HCT116 (cell line): ENCODE measurements at regions of chr18 and their contacts with region 1.

Region 1: DNA sequence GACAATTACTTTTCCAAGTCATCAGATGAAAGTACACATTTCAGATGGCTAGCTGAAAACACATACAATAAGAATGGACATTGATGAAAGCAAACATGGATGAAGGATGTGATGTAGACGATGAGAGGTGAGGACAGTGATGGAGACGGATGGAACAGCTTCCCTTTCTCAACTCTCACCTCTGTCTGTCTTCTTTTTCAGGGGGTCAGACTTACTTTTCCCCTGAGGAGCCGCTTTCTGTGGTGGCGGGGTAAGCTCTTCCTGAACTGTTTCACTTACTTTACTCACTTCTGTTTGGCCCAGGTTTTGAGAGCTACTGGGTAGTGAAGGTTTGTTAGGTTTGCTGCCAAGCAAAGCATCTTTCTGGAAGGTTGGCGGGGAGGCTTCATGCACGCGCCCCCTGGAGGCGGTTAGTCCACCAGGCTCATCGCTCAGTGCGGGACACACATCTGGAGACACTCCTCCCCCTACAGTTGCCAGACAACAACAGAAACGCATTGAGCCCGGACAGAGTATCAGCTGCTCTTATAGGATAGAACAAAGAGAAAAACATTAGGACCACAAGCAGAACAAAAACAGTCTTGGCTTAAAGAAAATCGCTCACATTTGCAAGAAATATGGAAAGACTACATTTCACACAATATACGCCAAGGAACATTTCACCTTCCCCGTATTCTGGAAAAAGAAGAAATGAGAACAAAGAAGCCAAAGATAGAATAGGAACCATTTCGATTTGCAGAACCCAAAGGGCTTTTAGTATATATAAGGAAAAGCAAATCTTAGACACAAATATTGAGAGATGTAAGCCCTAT is 90.5 kb downstream of the MYOM1 start:
- DNase-seq: peak; percentile 72
- ATAC-seq: peak; percentile 100
- H3K4me3 ChIP-seq: no peak overlapping the region
- H3K27ac ChIP-seq: no peak overlapping the region
- H3K4me1 ChIP-seq: peaks cover 3 to 5% of the 10 kb centered on the region in 2 experiments; a peak in 1 of 4 replicates
- H3K27me3 ChIP-seq: no peaks in the 10 kb centered on the region
- CTCF ChIP-seq: peak; percentile 89 to 98 (median 96)
- POLR2A ChIP-seq: no peak
- RAD21 ChIP-seq: peak; percentile 65

Region 2: GRCh38 chr18:2985628-2986027 is 143.6 kb before region 1 on chr18:
- CTCF ChIA-PET with region 1: interaction called, 10 read pairs
- POLR2A ChIA-PET with region 1: no interaction called
- RAD21 ChIA-PET with region 1: no interaction called
- intact Hi-C with region 1: no loop called
- DNase-seq: peak; percentile 18
- ATAC-seq: peak; percentile 73; the same call in 1 of the 2 replicates
- H3K4me3 ChIP-seq: no peak overlapping the region
- H3K27ac ChIP-seq: no peak overlapping the region
- H3K4me1 ChIP-seq: peaks cover 9 to 17% of the 10 kb centered on the region in 2 experiments
- H3K27me3 ChIP-seq: no peaks in the 10 kb centered on the region
- CTCF ChIP-seq: peak; percentile 19 to 63 (median 61); a peak in 5 of 6 replicates
- POLR2A ChIP-seq: no peak
- RAD21 ChIP-seq: peak; percentile 49

Region 3: DNA sequence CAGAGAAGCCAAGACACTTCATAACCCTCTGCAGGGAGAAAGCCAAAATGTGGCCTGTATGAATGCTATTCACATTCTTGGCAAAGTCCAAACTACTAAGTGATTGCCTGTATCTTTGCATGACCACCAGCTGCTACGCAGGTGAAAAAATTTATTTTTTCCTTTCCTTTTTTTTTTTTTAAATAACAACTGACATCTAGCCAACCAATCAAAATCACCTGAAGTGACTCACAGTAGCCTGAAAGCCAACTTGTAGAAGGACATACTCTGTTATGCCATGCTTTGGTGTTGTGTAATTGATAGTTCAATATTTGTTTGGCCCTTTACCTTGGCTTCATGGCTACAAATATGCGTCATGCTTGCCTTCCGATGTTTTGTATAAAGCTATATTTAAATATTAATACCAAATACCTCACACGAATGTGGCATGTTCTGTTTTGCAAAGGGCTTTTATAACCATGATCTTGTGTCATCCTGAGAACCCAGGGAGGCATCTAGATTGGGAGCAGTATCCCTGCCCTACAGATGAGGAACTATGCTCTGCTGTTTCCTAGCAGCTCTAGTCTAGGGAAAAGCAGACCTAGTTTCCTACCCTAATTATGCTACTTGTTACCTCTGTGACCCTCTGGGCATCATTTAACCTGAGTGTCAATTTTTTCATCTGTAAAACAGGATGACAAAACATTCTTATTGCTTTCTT is 11.6 kb before region 1 on chr18:
- CTCF ChIA-PET with region 1: interaction called, 20 read pairs
- POLR2A ChIA-PET with region 1: no interaction called
- RAD21 ChIA-PET with region 1: no interaction called
- intact Hi-C with region 1: no loop called
- DNase-seq: no peak
- ATAC-seq: no peak
- H3K4me3 ChIP-seq: no peak overlapping the region
- H3K27ac ChIP-seq: no peak overlapping the region
- H3K4me1 ChIP-seq: peaks cover 0 to 8% of the 10 kb centered on the region in 2 experiments; a peak in 2 of 4 replicates
- H3K27me3 ChIP-seq: no peaks in the 10 kb centered on the region
- CTCF ChIP-seq: no peak
- POLR2A ChIP-seq: no peak
- RAD21 ChIP-seq: no peak